Body of pancreas (tissue), 4 donors: ENCODE measurements at regions of chr13 and their contacts with region 1.

Region 1: DNA sequence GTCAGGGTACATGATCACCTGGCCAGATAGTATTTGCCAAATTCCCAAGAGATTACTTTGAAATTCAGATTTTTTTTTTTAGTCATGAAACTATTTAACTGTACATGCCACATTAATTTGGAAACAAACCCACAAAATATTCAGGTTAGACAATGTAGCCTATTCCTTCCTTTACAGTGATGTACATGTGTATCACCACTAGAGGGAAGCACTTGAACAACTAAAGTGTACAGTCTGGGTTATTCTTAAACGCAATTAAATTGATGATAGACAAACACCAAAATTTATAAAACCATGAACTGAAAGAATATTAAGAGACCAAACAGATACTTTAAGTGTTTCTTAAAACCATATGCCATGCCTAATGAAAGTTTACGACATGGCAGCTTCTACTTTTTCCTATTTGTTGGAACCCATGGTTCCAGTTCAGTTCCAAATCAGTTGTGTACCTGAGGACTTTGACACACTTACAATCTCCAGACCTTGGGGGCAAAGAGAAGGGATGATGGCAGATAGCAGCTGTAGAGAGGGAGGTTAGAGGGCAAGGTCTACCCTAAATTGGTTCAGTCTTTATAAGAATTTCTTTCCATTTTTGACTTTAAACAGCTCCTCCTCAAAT is 52.8 kb downstream of the TNFSF13B start:
- DNase-seq: no peak
- ATAC-seq: peak; percentile 79
- H3K4me3 ChIP-seq: no peak overlapping the region
- H3K27ac ChIP-seq: no peak overlapping the region
- H3K4me1 ChIP-seq: no peaks in the 10 kb centered on the region
- H3K27me3 ChIP-seq: no peaks in the 10 kb centered on the region
- CTCF ChIP-seq: peak; percentile 44 to 83 (median 68)
- POLR2A ChIP-seq: no peak

Region 2: DNA sequence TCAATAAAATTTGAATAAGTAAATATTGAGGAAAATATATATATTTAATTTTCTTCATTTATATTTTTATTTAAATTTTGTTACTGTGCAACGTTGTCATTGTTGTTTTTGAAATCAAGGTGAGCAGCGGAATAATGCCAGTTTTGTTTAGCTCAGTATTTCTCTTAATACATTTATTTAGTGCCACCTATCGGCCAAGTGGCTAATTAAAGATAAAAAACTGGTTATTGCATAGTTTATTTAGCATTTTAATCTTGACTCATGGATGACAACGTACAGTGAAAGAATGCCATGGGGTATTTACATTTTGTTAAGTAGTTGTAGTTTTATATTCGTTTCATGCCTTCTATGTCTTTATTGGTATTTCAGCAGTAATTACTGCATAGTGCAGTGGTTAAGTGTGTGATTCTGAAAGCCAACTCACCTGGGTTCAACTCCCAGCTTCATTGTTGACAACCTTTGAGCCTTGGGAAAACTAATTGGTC is 572.9 kb after region 1 on chr13:
- intact Hi-C with region 1: loop called (anchors 10 kb)
- DNase-seq: peak in 1 of 4 donors; percentile 19
- ATAC-seq: no peak
- H3K4me3 ChIP-seq: no peak overlapping the region
- H3K27ac ChIP-seq: no peak overlapping the region
- H3K4me1 ChIP-seq: no peaks in the 10 kb centered on the region
- H3K27me3 ChIP-seq: no peaks in the 10 kb centered on the region
- CTCF ChIP-seq: peak in 6 of 7 experiments; percentile 41 to 67 (median 62)
- POLR2A ChIP-seq: no peak